Naive thymus-derived CD4-positive, alpha-beta T cell (primary cell): ENCODE measurements at regions of chr18 and their contacts with region 1.

Region 1: GRCh38 chr18:45664824-45665763 is 49.8 kb downstream of the SLC14A2 start:
- DNase-seq: peak; percentile 35 to 76 (median 63)
- ATAC-seq: peak; percentile 86
- H3K4me3 ChIP-seq: no peak overlapping the region
- H3K4me3 Mint-ChIP-seq: peak overlapping the region; percentile 1 to 87 (median 62)
- H3K27ac ChIP-seq: no peak overlapping the region
- H3K27ac Mint-ChIP-seq: peak overlapping the region; percentile 8 to 91 (median 50)
- H3K4me1 ChIP-seq: peaks cover 41 to 49% of the 10 kb centered on the region in 2 donors
- H3K4me1 Mint-ChIP-seq: peaks cover 38 to 67% (median 53%) of the 10 kb centered on the region in 7 donors
- H3K27me3 ChIP-seq: no peaks in the 10 kb centered on the region
- H3K27me3 Mint-ChIP-seq: peaks cover 0 to 20% (median 0%) of the 10 kb centered on the region in 5 donors

Region 2: DNA sequence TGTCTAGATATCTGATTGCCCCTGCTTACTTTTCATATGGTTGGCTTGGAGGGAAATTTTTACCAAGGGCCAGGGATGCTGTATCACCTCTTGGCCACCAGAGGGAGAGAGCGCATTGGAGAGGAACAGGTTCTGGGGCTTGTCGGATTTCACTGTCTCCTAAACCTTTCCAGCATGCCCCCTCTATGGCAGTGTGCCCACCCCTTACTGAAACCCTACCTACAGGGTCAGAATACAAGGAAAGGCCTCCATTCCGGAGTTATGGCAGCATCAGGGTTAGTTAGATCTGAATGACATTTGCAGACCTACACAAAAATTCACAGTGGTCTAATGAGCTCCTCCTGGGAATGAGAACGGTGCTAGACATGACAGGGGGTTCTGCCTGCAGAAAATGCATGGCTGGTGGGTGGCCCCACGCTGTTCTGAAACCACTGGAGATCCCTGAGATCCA is 44.0 kb before region 1 on chr18:
- CTCF ChIA-PET with region 1: interaction called, 8 read pairs
- POLR2A ChIA-PET with region 1: no interaction called
- intact Hi-C with region 1: loop called in 1 of 2 experiments (anchors 1 kb)
- DNase-seq: peak in 8 of 9 donors; percentile 8 to 61 (median 40)
- ATAC-seq: peak; percentile 76
- H3K4me3 ChIP-seq: no peak overlapping the region
- H3K4me3 Mint-ChIP-seq: no peak overlapping the region
- H3K27ac ChIP-seq: no peak overlapping the region
- H3K27ac Mint-ChIP-seq: no peak overlapping the region
- H3K4me1 ChIP-seq: no peaks in the 10 kb centered on the region
- H3K4me1 Mint-ChIP-seq: no peaks in the 10 kb centered on the region
- H3K27me3 ChIP-seq: no peaks in the 10 kb centered on the region
- H3K27me3 Mint-ChIP-seq: peaks cover 0 to 27% (median 10%) of the 10 kb centered on the region in 5 donors

Region 3: GRCh38 chr18:45802608-45803492 is 137.8 kb after region 1 on chr18:
- CTCF ChIA-PET with region 1: interaction called, 4 read pairs
- POLR2A ChIA-PET with region 1: no interaction called
- intact Hi-C with region 1: loop called (anchors 1 kb)
- DNase-seq: no peak
- ATAC-seq: peak; percentile 41
- H3K4me3 ChIP-seq: no peak overlapping the region
- H3K4me3 Mint-ChIP-seq: no peak overlapping the region
- H3K27ac ChIP-seq: no peak overlapping the region
- H3K27ac Mint-ChIP-seq: no peak overlapping the region
- H3K4me1 ChIP-seq: no peaks in the 10 kb centered on the region
- H3K4me1 Mint-ChIP-seq: peaks cover 0 to 4% (median 0%) of the 10 kb centered on the region in 7 donors
- H3K27me3 ChIP-seq: no peaks in the 10 kb centered on the region
- H3K27me3 Mint-ChIP-seq: peaks cover 5 to 32% (median 11%) of the 10 kb centered on the region in 5 donors

Region 4: GRCh38 chr18:45879681-45880655 is 214.9 kb after region 1 on chr18:
- CTCF ChIA-PET with region 1: interaction called, 157 read pairs
- POLR2A ChIA-PET with region 1: interaction called, 4 read pairs
- intact Hi-C with region 1: loop called (anchors 1 kb)
- DNase-seq: peak; percentile 48 to 80 (median 69)
- ATAC-seq: peak; percentile 98
- H3K4me3 ChIP-seq: no peak overlapping the region
- H3K4me3 Mint-ChIP-seq: peak overlapping the region in 1 of 10 donors; percentile 8
- H3K27ac ChIP-seq: no peak overlapping the region
- H3K27ac Mint-ChIP-seq: peak overlapping the region in 7 of 9 donors; percentile 17 to 67 (median 41)
- H3K4me1 ChIP-seq: peaks cover 0 to 3% of the 10 kb centered on the region in 2 donors
- H3K4me1 Mint-ChIP-seq: peaks cover 9 to 16% (median 16%) of the 10 kb centered on the region in 7 donors
- H3K27me3 ChIP-seq: no peaks in the 10 kb centered on the region
- H3K27me3 Mint-ChIP-seq: no peaks in the 10 kb centered on the region

Region 5: GRCh38 chr18:45967007-45967706 is 302.1 kb after region 1 on chr18 and contains the start of gene EPG5:
- CTCF ChIA-PET with region 1: interaction called, 3 read pairs
- POLR2A ChIA-PET with region 1: no interaction called
- intact Hi-C with region 1: loop called (anchors 2 kb)
- DNase-seq: peak; percentile 73 to 91 (median 90)
- ATAC-seq: peak; percentile 98
- H3K4me3 ChIP-seq: peak within 1 kb of the TSS; percentile 79
- H3K4me3 Mint-ChIP-seq: peak within 1 kb of the TSS; percentile 94 to 100 (median 97)
- H3K27ac ChIP-seq: peak within 1 kb of the TSS; percentile 86
- H3K27ac Mint-ChIP-seq: peak within 1 kb of the TSS; percentile 84 to 98 (median 97)
- H3K4me1 ChIP-seq: peaks cover 14 to 25% of the 10 kb centered on the region in 2 donors
- H3K4me1 Mint-ChIP-seq: peaks cover 33 to 55% (median 47%) of the 10 kb centered on the region in 7 donors
- H3K27me3 ChIP-seq: no peaks in the 10 kb centered on the region
- H3K27me3 Mint-ChIP-seq: no peaks in the 10 kb centered on the region
- total RNA-seq, gene EPG5: 26.0 to 54.8 (median 44.7) TPM

Region 6: GRCh38 chr18:46660955-46661749 is 996.1 kb after region 1 on chr18:
- CTCF ChIA-PET with region 1: no interaction called
- POLR2A ChIA-PET with region 1: no interaction called
- intact Hi-C with region 1: loop called in 1 of 2 experiments (anchors 10 kb)
- DNase-seq: no peak
- ATAC-seq: no peak
- H3K4me3 ChIP-seq: no peak overlapping the region
- H3K4me3 Mint-ChIP-seq: no peak overlapping the region
- H3K27ac ChIP-seq: no peak overlapping the region
- H3K27ac Mint-ChIP-seq: no peak overlapping the region
- H3K4me1 ChIP-seq: no peaks in the 10 kb centered on the region
- H3K4me1 Mint-ChIP-seq: no peaks in the 10 kb centered on the region
- H3K27me3 ChIP-seq: no peaks in the 10 kb centered on the region
- H3K27me3 Mint-ChIP-seq: peaks cover 0 to 10% (median 0%) of the 10 kb centered on the region in 5 donors